Uterus (tissue), 4 donors: ENCODE measurements at regions of chr1 and their contacts with region 1.

Region 1: GRCh38 chr1:191608367-191608766 is 549.9 kb upstream of the RGS18 start:
- DNase-seq: no peak
- H3K4me3 ChIP-seq: no peak overlapping the region
- H3K27ac ChIP-seq: no peak overlapping the region
- H3K4me1 ChIP-seq: no peaks in the 10 kb centered on the region
- H3K27me3 ChIP-seq: peaks cover 0 to 7% of the 10 kb centered on the region in 2 donors
- CTCF ChIP-seq: no peak
- POLR2A ChIP-seq: no peak

Region 2: DNA sequence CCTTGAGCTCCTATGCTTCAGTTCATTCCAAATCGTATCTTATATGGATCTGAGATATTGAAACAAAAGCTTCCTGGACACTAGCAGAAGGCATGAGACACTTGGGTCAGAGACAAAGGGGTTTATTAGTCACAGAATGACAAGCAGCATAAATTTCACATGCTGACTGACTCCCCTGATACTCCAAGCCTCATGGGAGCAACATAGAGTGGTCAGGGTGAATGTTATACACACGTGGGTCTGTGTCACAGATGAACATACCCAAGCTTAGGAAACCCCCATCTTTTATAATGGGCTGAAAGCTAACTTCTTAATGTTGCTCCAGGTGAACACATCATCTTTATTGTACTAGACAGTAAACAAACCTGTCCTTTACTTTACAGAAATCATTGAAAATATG is 50.0 kb before region 1 on chr1:
- intact Hi-C with region 1: no loop called
- DNase-seq: no peak
- H3K4me3 ChIP-seq: no peak overlapping the region
- H3K27ac ChIP-seq: no peak overlapping the region
- H3K4me1 ChIP-seq: no peaks in the 10 kb centered on the region
- H3K27me3 ChIP-seq: no peaks in the 10 kb centered on the region
- CTCF ChIP-seq: no peak
- POLR2A ChIP-seq: no peak

Region 3: DNA sequence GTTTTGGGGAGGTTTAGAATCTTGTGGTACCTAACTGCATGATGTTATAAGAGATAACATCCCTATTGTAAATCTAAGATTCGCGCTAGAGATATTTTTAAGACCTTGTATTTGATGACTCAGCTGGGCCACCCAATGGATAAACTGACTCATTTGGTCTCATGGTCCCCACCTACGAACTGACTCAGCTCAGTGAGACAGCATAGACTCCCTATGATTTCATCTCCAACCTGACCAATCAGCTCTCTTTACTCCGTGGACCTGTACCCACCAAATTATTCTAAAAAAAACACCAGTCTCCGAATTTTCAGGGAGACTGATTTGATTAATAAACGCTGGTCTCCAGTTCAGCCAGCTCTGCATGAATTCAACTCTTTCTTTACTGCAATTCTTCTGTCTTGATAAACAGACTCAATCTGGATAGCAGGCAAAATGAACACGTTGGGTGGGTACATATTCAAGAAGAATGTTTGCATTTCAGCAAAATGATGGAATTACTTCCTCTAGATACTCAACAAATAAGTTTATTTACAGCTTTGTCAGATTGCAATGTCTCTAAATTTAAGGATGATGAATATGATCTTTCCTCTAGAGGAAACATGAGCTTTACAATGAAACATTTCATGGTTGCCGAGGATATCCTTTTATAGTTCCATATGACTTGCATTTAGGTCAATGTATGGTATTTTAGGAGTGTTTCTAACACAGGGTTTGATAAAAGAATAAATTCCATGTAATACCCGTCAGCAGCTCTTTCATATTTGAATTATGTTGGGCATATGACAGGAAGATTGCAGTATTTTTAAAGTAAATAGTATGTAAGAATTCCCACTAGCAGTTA is 33.3 kb after region 1 on chr1:
- intact Hi-C with region 1: no loop called
- DNase-seq: no peak
- H3K4me3 ChIP-seq: no peak overlapping the region
- H3K27ac ChIP-seq: no peak overlapping the region
- H3K4me1 ChIP-seq: no peaks in the 10 kb centered on the region
- H3K27me3 ChIP-seq: no peaks in the 10 kb centered on the region
- CTCF ChIP-seq: no peak
- POLR2A ChIP-seq: no peak

Region 4: DNA sequence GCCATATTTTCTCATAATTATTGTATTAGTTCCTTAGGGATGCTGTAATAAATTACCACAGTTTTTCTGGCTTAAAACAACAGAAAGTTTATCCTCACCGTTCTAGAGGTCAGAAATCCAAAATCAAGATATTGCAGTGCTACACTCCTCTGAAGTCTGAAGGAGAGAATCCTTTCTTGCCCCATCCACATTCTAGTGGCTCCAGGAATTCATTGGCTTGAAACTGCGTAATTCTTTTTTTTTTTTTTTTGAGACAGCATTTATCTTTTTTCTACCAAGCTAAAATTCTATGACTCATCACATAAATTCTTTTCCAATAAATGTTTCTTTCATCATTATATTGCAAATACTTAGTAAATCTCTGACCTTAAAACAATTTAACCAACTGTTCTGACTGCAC is 98.9 kb after region 1 on chr1:
- intact Hi-C with region 1: no loop called
- DNase-seq: no peak
- H3K4me3 ChIP-seq: no peak overlapping the region
- H3K27ac ChIP-seq: no peak overlapping the region
- H3K4me1 ChIP-seq: no peaks in the 10 kb centered on the region
- H3K27me3 ChIP-seq: no peaks in the 10 kb centered on the region
- CTCF ChIP-seq: no peak
- POLR2A ChIP-seq: no peak

Region 5: DNA sequence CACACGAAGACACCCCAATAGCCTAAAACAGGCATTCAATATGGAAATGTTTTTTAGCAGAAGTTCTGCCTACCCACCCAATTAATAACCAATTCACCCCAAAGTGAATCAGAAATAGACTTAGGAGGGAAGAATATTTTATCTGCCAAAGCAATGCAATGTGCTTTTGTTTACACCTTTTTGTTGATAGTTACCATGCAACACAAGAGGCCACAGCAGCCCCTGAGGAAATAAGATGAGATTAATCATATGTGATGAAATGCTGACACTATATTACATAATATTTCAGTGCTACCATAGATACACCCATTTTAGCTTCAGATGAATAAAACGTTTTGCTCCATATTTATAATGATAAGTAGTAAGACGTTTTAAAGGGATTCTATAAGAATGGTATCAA is 1139.6 kb after region 1 on chr1:
- intact Hi-C with region 1: loop called (anchors 10 kb)
- DNase-seq: no peak
- H3K4me3 ChIP-seq: no peak overlapping the region
- H3K27ac ChIP-seq: no peak overlapping the region
- H3K4me1 ChIP-seq: no peaks in the 10 kb centered on the region
- H3K27me3 ChIP-seq: no peaks in the 10 kb centered on the region
- CTCF ChIP-seq: no peak
- POLR2A ChIP-seq: no peak